ENCODE measurements at regions of chr6 and their contacts with region 1.

Region 1: GRCh38 chr6:24855395-24856245 is 56.9 kb upstream of the ARMH2 start:
- DNase-seq: no peak
- H3K4me3 ChIP-seq: no peak overlapping the region
- CTCF ChIP-seq: peak; percentile 85

Region 2: GRCh38 chr6:24874776-24875534 is 19.3 kb after region 1 on chr6:
- CTCF ChIA-PET with region 1: interaction called, 10 read pairs
- POLR2A ChIA-PET with region 1: no interaction called
- DNase-seq: no peak
- H3K4me3 ChIP-seq: no peak overlapping the region
- CTCF ChIP-seq: no peak

Region 3: GRCh38 chr6:25017932-25018567 is 162.4 kb after region 1 on chr6:
- CTCF ChIA-PET with region 1: interaction called, 68 read pairs
- POLR2A ChIA-PET with region 1: no interaction called
- DNase-seq: no peak
- H3K4me3 ChIP-seq: no peak overlapping the region
- CTCF ChIP-seq: peak; percentile 30

Region 4: GRCh38 chr6:25061289-25061936 is 205.8 kb after region 1 on chr6:
- CTCF ChIA-PET with region 1: interaction called, 15 read pairs
- POLR2A ChIA-PET with region 1: no interaction called
- DNase-seq: peak; percentile 49
- H3K4me3 ChIP-seq: no peak overlapping the region
- CTCF ChIP-seq: no peak

Region 5: GRCh38 chr6:25070547-25071366 is 215.1 kb after region 1 on chr6:
- CTCF ChIA-PET with region 1: interaction called, 134 read pairs
- POLR2A ChIA-PET with region 1: no interaction called
- DNase-seq: no peak
- H3K4me3 ChIP-seq: no peak overlapping the region
- CTCF ChIP-seq: peak; percentile 80